ENCODE measurements at regions of chr6 and their contacts with region 1.

Region 1: GRCh38 chr6:2971420-2972218 is at the start of gene SERPINB6:
- DNase-seq: peak; percentile 65
- ATAC-seq: peak; percentile 64
- H3K4me3 ChIP-seq: peak within 1 kb of the TSS; percentile 56 to 86 (median 68)
- H3K4me3 Mint-ChIP-seq: peak within 1 kb of the TSS; percentile 91
- H3K27ac ChIP-seq: peak within 1 kb of the TSS; percentile 39 to 74
- H3K27ac Mint-ChIP-seq: peak within 1 kb of the TSS; percentile 93
- H3K4me1 ChIP-seq: peaks cover 13 to 17% of the 10 kb centered on the region in 2 donors
- H3K4me1 Mint-ChIP-seq: peaks cover 43% of the 10 kb centered on the region
- H3K27me3 ChIP-seq: peaks cover 0 to 4% (median 0%) of the 10 kb centered on the region in 4 experiments
- H3K27me3 Mint-ChIP-seq: peaks cover 3% of the 10 kb centered on the region
- CTCF ChIP-seq: no peak
- total RNA-seq, gene SERPINB6: 58.5 and 58.9 TPM in 2 replicates

Region 2: GRCh38 chr6:2608503-2608902 is 363.1 kb before region 1 on chr6:
- CTCF ChIA-PET with region 1: no interaction called
- POLR2A ChIA-PET with region 1: no interaction called
- intact Hi-C with region 1: no loop called
- DNase-seq: no peak
- ATAC-seq: no peak
- H3K4me3 ChIP-seq: no peak overlapping the region
- H3K4me3 Mint-ChIP-seq: no peak overlapping the region
- H3K27ac ChIP-seq: no peak overlapping the region
- H3K27ac Mint-ChIP-seq: no peak overlapping the region
- H3K4me1 ChIP-seq: no peaks in the 10 kb centered on the region
- H3K4me1 Mint-ChIP-seq: no peaks in the 10 kb centered on the region
- H3K27me3 ChIP-seq: no peaks in the 10 kb centered on the region
- H3K27me3 Mint-ChIP-seq: peaks cover 19% of the 10 kb centered on the region
- CTCF ChIP-seq: no peak

Region 3: DNA sequence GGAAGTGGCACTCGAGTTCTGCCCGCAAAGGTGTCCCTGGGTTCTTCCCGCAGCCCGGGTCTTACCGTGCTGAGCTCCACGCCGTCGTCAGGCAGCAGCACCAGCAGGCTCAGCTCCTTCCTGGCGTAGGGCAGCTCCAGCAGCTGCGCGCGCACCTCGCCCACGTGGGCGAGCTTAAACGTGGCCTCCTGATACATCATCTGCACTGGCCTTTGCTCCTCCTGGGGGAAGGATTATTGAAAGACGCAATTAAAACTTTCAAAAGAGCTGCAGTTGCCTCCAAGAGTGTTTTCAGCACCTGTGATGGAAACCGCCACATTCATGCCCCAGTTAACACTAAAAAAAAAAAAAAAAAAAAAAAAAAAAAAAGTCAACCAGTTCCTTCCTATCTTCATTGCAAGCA is 79.8 kb before region 1 on chr6:
- CTCF ChIA-PET with region 1: no interaction called
- POLR2A ChIA-PET with region 1: no interaction called
- intact Hi-C with region 1: no loop called
- DNase-seq: peak; percentile 87
- ATAC-seq: peak; percentile 90
- H3K4me3 ChIP-seq: peak overlapping the region in 4 of 5 experiments; percentile 5 to 34 (median 16)
- H3K4me3 Mint-ChIP-seq: peak overlapping the region; percentile 86
- H3K27ac ChIP-seq: peak overlapping the region; percentile 59 to 76
- H3K27ac Mint-ChIP-seq: peak overlapping the region; percentile 94
- H3K4me1 ChIP-seq: peaks cover 30 to 32% of the 10 kb centered on the region in 2 donors
- H3K4me1 Mint-ChIP-seq: peaks cover 59% of the 10 kb centered on the region
- H3K27me3 ChIP-seq: no peaks in the 10 kb centered on the region
- H3K27me3 Mint-ChIP-seq: no peaks in the 10 kb centered on the region
- CTCF ChIP-seq: no peak

Region 4: GRCh38 chr6:2940010-2940850 is 31.4 kb before region 1 on chr6:
- CTCF ChIA-PET with region 1: interaction called, 4 read pairs
- POLR2A ChIA-PET with region 1: interaction called, 3 read pairs
- intact Hi-C with region 1: loop called (anchors 2 kb)
- DNase-seq: peak; percentile 72
- ATAC-seq: peak; percentile 59
- H3K4me3 ChIP-seq: peak overlapping the region in 4 of 5 experiments; percentile 5 to 55 (median 42)
- H3K4me3 Mint-ChIP-seq: peak overlapping the region; percentile 86
- H3K27ac ChIP-seq: peak overlapping the region; percentile 31 to 68
- H3K27ac Mint-ChIP-seq: peak overlapping the region; percentile 93
- H3K4me1 ChIP-seq: peaks cover 45 to 62% of the 10 kb centered on the region in 2 donors
- H3K4me1 Mint-ChIP-seq: peaks cover 70% of the 10 kb centered on the region
- H3K27me3 ChIP-seq: no peaks in the 10 kb centered on the region
- H3K27me3 Mint-ChIP-seq: no peaks in the 10 kb centered on the region
- CTCF ChIP-seq: no peak

Region 5: DNA sequence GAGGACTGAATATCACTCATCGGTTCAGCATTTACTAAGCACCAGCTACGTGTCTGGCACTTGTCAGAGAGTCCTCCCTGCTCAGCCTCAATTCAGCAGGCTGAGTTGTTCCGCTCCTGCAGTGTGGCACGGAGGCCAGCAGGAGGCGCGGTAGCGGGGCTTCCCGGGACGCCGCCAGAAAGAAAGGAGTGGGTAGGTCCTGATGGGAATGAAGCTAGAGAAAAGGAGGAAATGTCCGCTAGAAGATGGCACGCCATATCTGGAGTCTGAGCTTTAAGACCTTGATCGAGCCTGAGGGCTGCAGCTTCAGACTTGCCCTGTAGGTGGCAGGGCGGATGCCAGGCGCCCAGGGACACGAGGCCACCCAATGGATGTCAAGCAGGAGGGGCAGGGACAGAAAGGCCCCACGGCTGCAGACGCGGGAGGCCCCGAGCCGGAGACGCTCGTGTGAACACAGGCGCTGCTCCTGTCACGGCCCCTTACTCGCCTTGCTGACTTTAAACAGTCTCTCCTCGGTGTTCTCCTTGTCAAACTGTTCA is 19.0 kb before region 1 on chr6:
- CTCF ChIA-PET with region 1: interaction called, 6 read pairs
- POLR2A ChIA-PET with region 1: interaction called, 4 read pairs
- intact Hi-C with region 1: loop called (anchors 2 kb)
- DNase-seq: peak; percentile 69
- ATAC-seq: peak; percentile 97
- H3K4me3 ChIP-seq: peak overlapping the region in 1 of 5 experiments; percentile 15
- H3K4me3 Mint-ChIP-seq: peak overlapping the region; percentile 71
- H3K27ac ChIP-seq: no peak overlapping the region
- H3K27ac Mint-ChIP-seq: no peak overlapping the region
- H3K4me1 ChIP-seq: peaks cover 0 to 17% of the 10 kb centered on the region in 2 donors
- H3K4me1 Mint-ChIP-seq: peaks cover 12% of the 10 kb centered on the region
- H3K27me3 ChIP-seq: no peaks in the 10 kb centered on the region
- H3K27me3 Mint-ChIP-seq: no peaks in the 10 kb centered on the region
- CTCF ChIP-seq: peak; percentile 90

Region 6: DNA sequence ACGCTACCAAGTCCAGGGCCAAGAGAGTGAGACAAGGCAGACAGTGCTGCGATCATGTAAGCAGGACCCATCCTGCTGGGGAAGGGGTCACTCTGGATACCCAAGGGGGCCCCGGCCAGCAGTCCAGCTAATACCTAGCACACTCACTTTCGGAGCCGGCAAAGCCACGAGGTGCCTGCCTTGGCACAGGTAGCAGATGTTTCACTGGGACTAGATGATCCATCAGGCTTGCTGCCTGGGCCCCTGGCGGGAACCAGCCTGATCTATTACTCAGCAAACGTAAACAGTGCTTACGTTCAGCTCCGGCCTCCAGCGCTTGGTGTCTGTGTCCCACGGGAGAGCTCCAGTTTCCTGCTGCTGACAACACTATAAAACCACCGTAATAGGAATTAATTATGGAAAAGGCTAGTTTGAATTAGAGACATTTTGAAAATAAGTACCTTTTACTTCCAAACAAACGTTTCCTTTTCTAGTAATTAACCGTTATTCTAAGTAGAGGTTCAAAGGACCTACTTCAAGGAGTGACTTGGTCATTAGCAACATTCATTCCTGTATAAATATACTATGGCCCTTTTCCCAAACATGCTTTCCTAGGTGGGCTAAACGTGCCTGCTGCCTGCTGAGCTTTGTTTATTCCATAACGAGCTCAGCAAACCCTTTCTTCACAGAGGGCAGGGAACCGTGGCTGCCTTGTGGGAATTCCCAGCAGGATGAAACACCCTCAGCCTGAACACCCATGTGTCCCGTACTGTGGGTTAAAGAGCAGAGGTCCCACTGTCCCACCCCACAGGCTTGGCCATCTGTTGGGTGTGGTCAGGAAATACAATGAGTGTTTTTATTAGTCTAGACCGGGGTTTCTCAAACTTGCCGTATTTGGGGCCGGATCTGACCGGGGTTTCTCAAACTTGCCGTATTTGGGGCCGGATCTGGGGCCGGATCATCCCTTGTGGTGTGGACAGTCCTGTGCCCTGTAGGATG is 466.9 kb after region 1 on chr6:
- CTCF ChIA-PET with region 1: no interaction called
- POLR2A ChIA-PET with region 1: no interaction called
- intact Hi-C with region 1: no loop called
- DNase-seq: no peak
- ATAC-seq: no peak
- H3K4me3 ChIP-seq: no peak overlapping the region
- H3K4me3 Mint-ChIP-seq: no peak overlapping the region
- H3K27ac ChIP-seq: no peak overlapping the region
- H3K27ac Mint-ChIP-seq: no peak overlapping the region
- H3K4me1 ChIP-seq: no peaks in the 10 kb centered on the region
- H3K4me1 Mint-ChIP-seq: no peaks in the 10 kb centered on the region
- H3K27me3 ChIP-seq: peaks cover 0 to 13% (median 0%) of the 10 kb centered on the region in 4 experiments
- H3K27me3 Mint-ChIP-seq: peaks cover 47% of the 10 kb centered on the region
- CTCF ChIP-seq: no peak

Measured in B cell (primary cell).